CD4-positive, alpha-beta T cell (primary cell): ENCODE measurements at regions of chr17 and their contacts with region 1.

Region 1: DNA sequence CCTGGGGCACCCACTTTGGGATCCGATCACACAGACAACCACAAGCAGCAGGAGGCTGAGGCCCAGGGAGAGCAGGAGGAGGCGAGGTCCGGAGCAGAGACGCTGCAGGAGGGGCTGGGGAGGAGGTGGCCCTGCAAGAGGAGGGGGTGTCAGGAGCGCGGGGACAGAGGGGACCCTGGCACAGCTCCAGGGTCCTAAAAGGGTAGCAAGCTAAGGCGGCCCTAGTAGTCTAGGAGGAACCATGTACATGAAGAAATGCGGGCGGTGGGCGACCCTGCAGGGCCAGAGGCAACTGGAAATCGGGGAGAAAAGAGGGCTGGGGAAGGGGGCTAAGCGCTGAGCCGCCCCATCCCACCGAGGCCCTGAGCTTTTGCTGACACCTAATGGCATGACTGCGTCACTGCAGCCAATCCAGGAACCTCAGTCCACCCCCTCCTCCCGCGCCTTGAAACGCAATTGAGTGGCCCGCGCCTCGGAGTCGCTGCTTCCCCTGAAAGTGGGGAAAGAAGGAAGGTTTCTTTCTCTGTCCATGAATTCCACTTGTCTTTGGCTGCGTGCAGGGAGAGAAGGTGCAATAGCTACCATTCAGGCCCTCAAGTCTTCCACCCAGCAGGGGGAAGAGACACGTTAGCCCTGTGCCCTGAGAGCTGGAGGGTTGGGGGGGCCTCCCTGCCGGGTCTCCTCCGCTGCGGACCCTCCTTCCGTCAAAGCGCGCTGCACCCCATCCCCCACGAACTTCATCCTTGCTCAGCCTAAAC is 1.8 kb downstream of the ASGR1 start:
- DNase-seq: peak; percentile 47 to 84 (median 56)
- ATAC-seq: peak; percentile 89
- H3K4me3 ChIP-seq: peak overlapping the region; percentile 43
- H3K4me3 Mint-ChIP-seq: peak overlapping the region; percentile 74
- H3K27ac ChIP-seq: no peak overlapping the region
- H3K27ac Mint-ChIP-seq: no peak overlapping the region
- H3K4me1 ChIP-seq: peaks cover 30% of the 10 kb centered on the region
- H3K4me1 Mint-ChIP-seq: peaks cover 14% of the 10 kb centered on the region
- H3K27me3 ChIP-seq: peaks cover 8 to 29% of the 10 kb centered on the region in 2 experiments
- H3K27me3 Mint-ChIP-seq: no peaks in the 10 kb centered on the region
- CTCF ChIP-seq: peak; percentile 96

Region 2: DNA sequence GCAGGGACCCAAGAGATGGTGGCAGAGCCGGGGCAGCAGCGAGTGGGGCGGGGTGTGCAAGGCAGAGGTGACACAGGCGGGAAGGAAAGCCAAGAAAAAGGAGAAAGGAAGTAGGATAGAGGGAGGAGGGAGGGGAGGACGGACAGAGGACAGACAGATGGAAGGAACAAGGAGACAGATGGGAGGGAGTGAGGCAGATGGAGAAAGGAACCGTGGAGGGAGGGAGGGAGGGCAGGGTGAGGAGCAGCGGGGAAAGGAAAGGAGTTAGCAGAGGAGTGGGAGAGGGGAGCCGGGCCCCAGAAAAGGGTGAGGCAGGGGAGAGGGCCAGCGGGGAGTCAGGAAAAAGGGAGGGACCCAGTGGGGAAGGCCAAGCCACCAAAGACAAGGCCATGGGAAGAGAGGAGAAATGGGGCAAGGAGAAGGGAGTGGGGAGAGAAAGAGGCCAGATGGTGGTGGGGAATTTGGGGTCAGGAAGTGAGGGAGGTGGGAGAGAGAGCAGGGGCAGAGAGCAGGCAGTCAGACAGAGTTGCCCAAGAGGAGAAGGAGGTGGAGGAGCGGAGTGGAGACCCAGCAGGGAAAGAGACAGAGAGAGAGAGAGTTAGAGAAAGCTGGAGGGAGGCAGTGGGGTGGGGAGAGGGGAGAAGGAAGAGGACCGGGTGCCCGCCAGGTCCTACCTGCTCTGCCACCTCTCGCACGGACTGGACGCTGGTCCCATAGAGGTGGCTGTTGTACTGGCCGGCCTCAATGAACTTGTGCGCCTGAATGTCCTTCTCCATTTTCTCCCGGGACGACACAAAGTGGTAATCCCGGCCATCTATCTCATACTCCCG is 15.1 kb after region 1 on chr17:
- CTCF ChIA-PET with region 1: interaction called, 3 read pairs
- POLR2A ChIA-PET with region 1: no interaction called
- intact Hi-C with region 1: loop called in 1 of 2 experiments (anchors 1 kb)
- DNase-seq: no peak
- ATAC-seq: no peak
- H3K4me3 ChIP-seq: no peak overlapping the region
- H3K4me3 Mint-ChIP-seq: no peak overlapping the region
- H3K27ac ChIP-seq: no peak overlapping the region
- H3K27ac Mint-ChIP-seq: no peak overlapping the region
- H3K4me1 ChIP-seq: peaks cover 3% of the 10 kb centered on the region
- H3K4me1 Mint-ChIP-seq: no peaks in the 10 kb centered on the region
- H3K27me3 ChIP-seq: no peaks in the 10 kb centered on the region
- H3K27me3 Mint-ChIP-seq: no peaks in the 10 kb centered on the region
- CTCF ChIP-seq: no peak